Activated naive CD4-positive, alpha-beta T cell treated with anti-CD3 and anti-CD28 coated beads for 36 hours (primary cell): ENCODE measurements at regions of chr3 and their contacts with region 1.

Region 1: GRCh38 chr3:72818092-72818773 is 30.0 kb downstream of the SHQ1 start:
- DNase-seq: peak; percentile 13
- H3K4me3 Mint-ChIP-seq: no peak overlapping the region
- H3K27ac Mint-ChIP-seq: no peak overlapping the region
- H3K4me1 Mint-ChIP-seq: peaks cover 19% of the 10 kb centered on the region
- H3K27me3 Mint-ChIP-seq: no peaks in the 10 kb centered on the region

Region 2: DNA sequence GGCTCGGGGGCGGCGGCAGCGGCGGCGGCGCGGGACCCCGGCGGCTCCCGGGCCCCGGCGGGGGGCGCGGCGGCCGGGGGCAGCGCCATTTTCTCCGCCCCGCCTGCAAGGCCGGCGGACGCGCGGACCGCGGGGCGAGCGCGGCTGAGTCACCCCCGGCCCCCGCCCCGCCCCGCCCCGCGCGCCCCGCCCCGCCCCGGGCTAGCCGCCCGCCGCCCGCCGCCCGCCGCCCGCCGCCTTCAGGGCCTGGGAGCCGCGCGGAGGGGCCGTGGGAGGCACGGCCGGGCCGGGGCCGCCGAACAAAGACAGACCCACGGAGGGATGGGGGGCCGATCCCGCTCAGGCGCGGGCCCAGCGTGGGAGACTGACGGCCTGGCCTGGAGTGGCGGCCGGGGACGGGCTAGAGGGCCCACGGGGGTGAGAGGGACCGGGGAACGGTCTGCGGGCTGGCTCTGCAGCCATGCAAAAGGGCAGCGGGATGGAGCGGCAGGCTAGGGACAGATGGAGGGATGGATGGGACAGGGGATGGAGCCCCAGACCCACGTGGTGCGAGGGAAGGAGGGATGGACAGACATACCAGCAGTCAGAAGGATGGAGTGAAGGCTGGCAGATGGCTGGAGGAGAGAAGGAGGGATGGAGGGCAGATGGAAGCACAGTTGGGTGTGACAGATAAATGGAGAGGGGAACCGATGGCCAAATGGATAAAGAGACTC is 1092.8 kb before region 1 on chr3 and contains the start of gene EIF4E3:
- CTCF ChIA-PET with region 1: no interaction called
- intact Hi-C with region 1: loop called (anchors 5 kb)
- DNase-seq: peak; percentile 31
- H3K4me3 Mint-ChIP-seq: peak within 1 kb of the TSS; percentile 90
- H3K27ac Mint-ChIP-seq: peak within 1 kb of the TSS; percentile 91
- H3K4me1 Mint-ChIP-seq: peaks cover 59% of the 10 kb centered on the region
- H3K27me3 Mint-ChIP-seq: no peaks in the 10 kb centered on the region
- total RNA-seq, gene EIF4E3: 25.2 to 26.2 TPM

Region 3: GRCh38 chr3:72100601-72101187 is 717.5 kb before region 1 on chr3:
- CTCF ChIA-PET with region 1: interaction called, 3 read pairs
- intact Hi-C with region 1: loop called (anchors 2 kb)
- DNase-seq: peak; percentile 99
- H3K4me3 Mint-ChIP-seq: peak overlapping the region; percentile 79
- H3K27ac Mint-ChIP-seq: peak overlapping the region; percentile 89
- H3K4me1 Mint-ChIP-seq: peaks cover 26% of the 10 kb centered on the region
- H3K27me3 Mint-ChIP-seq: peaks cover 7% of the 10 kb centered on the region

Region 4: DNA sequence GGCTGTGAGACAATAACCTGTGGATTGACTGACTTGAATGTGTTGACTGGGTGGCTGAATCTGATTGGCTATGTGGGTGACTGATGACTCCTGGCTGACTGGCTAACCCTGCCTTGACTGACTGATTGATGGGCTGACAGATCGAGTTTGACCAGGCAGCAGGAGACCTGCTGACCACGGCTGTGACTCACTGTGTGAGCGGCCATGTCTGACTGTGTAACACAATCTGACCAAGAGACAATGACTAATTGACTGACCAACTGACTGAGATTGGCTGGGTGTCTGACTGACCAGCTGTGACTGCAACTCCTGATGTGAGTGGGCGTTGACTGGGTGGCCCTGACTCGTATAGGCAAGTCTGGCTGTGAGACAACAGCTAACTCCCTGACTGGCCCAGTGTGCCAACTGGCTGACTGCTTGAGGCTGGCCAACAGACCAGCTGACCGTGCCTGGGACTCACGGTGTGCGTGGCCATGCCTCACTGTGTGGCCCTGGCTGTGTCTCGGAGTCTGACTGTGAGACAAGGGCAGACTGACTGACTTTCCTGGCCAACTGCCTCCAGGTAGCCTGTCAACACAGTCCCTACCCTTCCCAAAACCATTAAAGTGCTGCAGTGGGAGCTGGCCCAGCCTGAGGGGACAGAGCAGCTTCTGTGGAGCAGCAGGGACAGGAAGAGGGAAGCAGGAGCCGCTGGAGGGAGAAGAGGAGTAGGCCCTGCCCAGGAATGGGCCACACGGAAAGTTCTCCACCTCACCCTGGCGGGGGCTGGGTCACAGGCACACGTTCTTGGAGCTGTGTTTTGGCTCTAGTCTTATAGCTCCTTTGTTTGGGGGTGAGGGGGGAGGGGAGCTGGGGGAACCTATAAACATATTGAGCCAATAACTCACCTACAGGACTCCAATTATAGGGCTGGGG is 478.9 kb before region 1 on chr3:
- CTCF ChIA-PET with region 1: interaction called, 3 read pairs
- intact Hi-C with region 1: loop called (anchors 2 kb)
- DNase-seq: no peak
- H3K4me3 Mint-ChIP-seq: no peak overlapping the region
- H3K27ac Mint-ChIP-seq: no peak overlapping the region
- H3K4me1 Mint-ChIP-seq: peaks cover 36% of the 10 kb centered on the region
- H3K27me3 Mint-ChIP-seq: no peaks in the 10 kb centered on the region

Region 5: GRCh38 chr3:72482589-72483321 is 335.5 kb before region 1 on chr3:
- CTCF ChIA-PET with region 1: no interaction called
- intact Hi-C with region 1: loop called (anchors 1 kb)
- DNase-seq: peak; percentile 96
- H3K4me3 Mint-ChIP-seq: peak overlapping the region; percentile 4
- H3K27ac Mint-ChIP-seq: peak overlapping the region; percentile 88
- H3K4me1 Mint-ChIP-seq: peaks cover 68% of the 10 kb centered on the region
- H3K27me3 Mint-ChIP-seq: no peaks in the 10 kb centered on the region

Region 6: DNA sequence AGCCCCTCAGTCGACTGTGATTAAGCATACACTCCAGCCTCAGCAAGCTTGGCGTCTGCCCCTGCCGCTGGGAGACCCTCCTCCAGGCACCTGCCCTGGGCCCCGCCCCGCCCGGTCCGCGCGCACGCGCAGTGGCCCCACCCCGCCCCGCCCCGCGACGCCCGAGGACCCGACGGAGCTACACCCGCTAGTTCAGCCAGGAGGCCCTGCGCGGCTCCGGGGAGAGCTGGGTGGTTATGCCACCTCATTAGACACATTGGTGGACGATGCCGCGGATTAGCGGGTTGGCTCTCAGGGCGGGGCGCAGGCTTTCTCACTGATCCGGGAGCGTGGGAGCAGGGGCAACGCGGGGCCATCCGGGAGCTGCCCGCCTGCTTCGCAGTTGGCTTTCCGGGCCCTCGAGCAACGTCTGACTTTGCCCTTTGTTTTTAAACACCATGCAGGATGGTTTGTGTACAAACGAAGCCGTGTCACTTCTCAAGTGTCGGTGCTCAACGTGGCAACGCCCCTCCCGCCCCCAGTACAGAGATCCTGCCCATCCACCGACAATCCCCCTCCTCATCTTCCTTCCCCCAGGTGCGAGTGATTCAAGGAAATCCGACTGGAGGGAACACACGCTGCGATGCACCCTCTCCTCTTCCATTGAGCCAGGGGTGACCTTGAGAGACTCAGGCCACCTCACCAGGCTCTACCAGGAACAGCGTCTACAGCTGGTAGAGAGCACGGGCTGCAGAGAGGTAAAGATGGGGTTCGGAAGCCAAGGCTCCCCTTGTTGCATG is 79.3 kb before region 1 on chr3:
- CTCF ChIA-PET with region 1: interaction called, 4 read pairs
- intact Hi-C with region 1: loop called (anchors 1 kb)
- DNase-seq: peak; percentile 85
- H3K4me3 Mint-ChIP-seq: peak overlapping the region; percentile 83
- H3K27ac Mint-ChIP-seq: peak overlapping the region; percentile 51
- H3K4me1 Mint-ChIP-seq: peaks cover 21% of the 10 kb centered on the region
- H3K27me3 Mint-ChIP-seq: no peaks in the 10 kb centered on the region